ENCODE measurements at regions of chr17 and their contacts with region 1.

Region 1: GRCh38 chr17:1783834-1784611 is 22.2 kb downstream of the SERPINF1 start:
- DNase-seq: peak; percentile 75
- H3K4me3 ChIP-seq: peak overlapping the region; percentile 43
- H3K27ac ChIP-seq: peak overlapping the region; percentile 92
- H3K4me1 ChIP-seq: peaks cover 72% of the 10 kb centered on the region
- H3K27me3 ChIP-seq: no peaks in the 10 kb centered on the region
- CTCF ChIP-seq: peak; percentile 79

Region 2: DNA sequence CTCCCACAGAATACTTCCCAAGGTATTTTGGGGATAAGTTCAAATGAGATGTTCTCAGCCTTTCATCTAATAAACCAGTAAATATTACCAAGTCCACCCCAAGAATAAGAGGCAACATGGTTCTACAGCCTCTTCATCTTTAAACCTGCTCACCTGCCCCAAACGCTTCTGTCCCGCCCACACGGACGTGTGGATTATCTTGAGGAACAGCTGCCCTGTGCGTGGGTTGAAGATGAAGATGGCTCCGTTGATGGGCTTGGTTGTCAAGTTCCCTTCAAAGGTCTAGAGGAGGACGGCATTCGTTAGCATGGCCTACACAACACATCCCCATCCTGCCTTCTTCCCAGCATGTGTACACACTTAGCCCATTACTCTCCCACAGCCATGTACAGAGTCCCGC is 125.9 kb before region 1 on chr17:
- intact Hi-C with region 1: no loop called
- DNase-seq: no peak
- H3K4me3 ChIP-seq: no peak overlapping the region
- H3K27ac ChIP-seq: no peak overlapping the region
- H3K4me1 ChIP-seq: no peaks in the 10 kb centered on the region
- H3K27me3 ChIP-seq: no peaks in the 10 kb centered on the region
- CTCF ChIP-seq: no peak

Region 3: GRCh38 chr17:1724506-1725362 is 59.3 kb before region 1 on chr17 and contains the start of gene WDR81:
- intact Hi-C with region 1: loop called (anchors 5 kb)
- DNase-seq: peak; percentile 95
- H3K4me3 ChIP-seq: peak within 1 kb of the TSS; percentile 78
- H3K27ac ChIP-seq: peak within 1 kb of the TSS; percentile 92
- H3K4me1 ChIP-seq: peaks cover 77% of the 10 kb centered on the region
- H3K27me3 ChIP-seq: no peaks in the 10 kb centered on the region
- CTCF ChIP-seq: peak; percentile 22
- total RNA-seq, gene WDR81: 9.3 TPM

Region 4: DNA sequence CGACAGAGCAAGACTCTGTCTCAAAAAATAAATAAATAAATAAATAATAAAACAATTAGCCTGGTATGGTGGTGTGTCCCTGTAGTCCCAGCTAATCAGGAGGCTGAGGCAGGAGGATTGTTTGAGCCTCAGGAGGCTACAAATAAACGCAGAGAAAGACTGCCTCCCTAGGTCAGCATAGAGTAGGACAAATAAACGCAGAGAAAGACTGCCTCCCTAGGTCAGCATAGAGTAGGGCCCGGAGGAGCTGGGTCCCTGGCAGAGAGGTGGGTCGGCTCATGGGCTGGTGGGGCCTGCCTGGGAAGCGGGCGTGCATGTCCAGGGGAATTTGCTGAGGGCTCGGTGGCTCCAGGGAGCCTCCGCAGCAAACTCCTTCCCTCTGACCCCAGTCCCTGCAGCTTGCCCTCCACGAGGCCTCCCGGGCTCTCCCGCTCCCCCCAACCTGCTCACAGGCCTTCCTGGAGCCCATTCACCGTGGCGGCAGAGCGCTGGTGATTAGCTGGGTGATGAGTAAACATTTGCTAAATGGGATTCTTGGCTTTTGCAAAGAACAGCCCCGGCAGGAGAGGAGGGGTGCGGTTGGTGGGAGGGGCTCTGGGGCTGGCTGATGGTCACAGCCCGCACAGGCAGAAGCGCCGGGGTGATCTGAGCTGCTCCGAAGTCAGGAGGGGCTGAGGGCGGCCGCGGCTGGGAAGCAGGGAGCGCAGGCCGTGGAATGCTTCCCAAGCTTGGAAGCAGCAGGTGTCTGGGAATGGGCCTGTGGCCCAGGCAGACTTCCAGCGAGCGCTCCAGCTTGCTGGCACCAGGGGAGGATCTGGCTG is 147.9 kb after region 1 on chr17:
- intact Hi-C with region 1: no loop called
- DNase-seq: peak; percentile 40
- H3K4me3 ChIP-seq: peak overlapping the region; percentile 21
- H3K27ac ChIP-seq: peak overlapping the region; percentile 70
- H3K4me1 ChIP-seq: peaks cover 32% of the 10 kb centered on the region
- H3K27me3 ChIP-seq: peaks cover 13% of the 10 kb centered on the region
- CTCF ChIP-seq: no peak

Measured in left ventricle myocardium inferior (tissue), 1 donor.